ENCODE measurements at regions of chr7 and their contacts with region 1.

Region 1: DNA sequence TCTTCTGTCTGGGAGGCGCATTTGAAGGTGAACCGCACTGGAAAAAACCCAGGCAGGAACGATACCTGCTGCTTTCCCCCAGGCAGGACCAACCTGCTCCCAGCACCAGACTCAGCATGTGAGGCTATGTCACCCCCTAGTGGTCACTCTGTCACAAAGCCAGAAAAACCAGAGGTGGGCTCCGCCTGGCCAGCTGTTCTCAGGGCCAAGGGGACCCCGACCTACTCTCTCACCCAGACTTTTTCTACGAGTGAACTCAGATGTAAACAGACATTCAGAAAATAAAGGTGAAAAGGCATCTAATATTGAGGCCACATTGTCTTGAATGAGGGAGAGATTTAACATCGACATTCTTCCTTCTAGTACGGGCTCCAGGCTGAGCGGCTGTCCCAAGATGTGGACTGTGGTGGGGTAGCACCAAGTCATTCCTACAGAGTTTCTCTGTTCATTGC is 117.3 kb downstream of the PRKAG2 start:
- DNase-seq: peak in 8 of 9 experiments; percentile 31 to 81 (median 66)
- ATAC-seq: peak; percentile 62
- H3K4me3 ChIP-seq: no peak overlapping the region
- H3K4me3 Mint-ChIP-seq: no peak overlapping the region
- H3K27ac ChIP-seq: no peak overlapping the region
- H3K27ac Mint-ChIP-seq: peak overlapping the region; percentile 41
- H3K4me1 ChIP-seq: peaks cover 25% of the 10 kb centered on the region
- H3K4me1 Mint-ChIP-seq: peaks cover 29% of the 10 kb centered on the region
- H3K27me3 ChIP-seq: no peaks in the 10 kb centered on the region
- H3K27me3 Mint-ChIP-seq: no peaks in the 10 kb centered on the region
- CTCF ChIP-seq: peak; percentile 95

Region 2: DNA sequence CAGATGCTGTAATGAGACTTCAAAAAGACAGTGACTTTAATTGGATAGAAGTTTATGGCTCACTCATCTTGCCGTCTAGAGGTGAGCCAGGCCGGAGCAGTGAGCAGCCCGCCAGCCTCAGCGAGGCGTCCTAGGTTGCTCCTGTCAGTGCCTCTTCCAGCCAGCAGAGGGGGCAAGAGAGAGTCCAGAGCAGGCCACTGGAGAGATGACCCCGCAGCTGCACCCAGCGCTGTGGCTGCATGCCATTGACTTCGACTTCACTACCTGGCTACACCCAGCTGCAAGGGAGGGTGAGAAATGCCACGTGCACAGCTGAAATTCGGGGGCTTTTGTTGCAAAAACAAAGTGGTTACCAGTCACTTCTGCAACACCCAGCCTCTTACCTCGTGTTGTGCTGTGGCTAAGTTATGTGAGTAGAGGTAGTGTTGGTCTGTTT is 391.5 kb before region 1 on chr7:
- CTCF ChIA-PET with region 1: interaction called, 6 read pairs
- POLR2A ChIA-PET with region 1: no interaction called
- intact Hi-C with region 1: loop called (anchors 1 to 5 kb)
- DNase-seq: peak; percentile 56 to 86 (median 77)
- ATAC-seq: peak; percentile 97
- H3K4me3 ChIP-seq: no peak overlapping the region
- H3K4me3 Mint-ChIP-seq: no peak overlapping the region
- H3K27ac ChIP-seq: no peak overlapping the region
- H3K27ac Mint-ChIP-seq: peak overlapping the region; percentile 64
- H3K4me1 ChIP-seq: peaks cover 9% of the 10 kb centered on the region
- H3K4me1 Mint-ChIP-seq: peaks cover 18% of the 10 kb centered on the region
- H3K27me3 ChIP-seq: no peaks in the 10 kb centered on the region
- H3K27me3 Mint-ChIP-seq: no peaks in the 10 kb centered on the region
- CTCF ChIP-seq: peak; percentile 96

Region 3: GRCh38 chr7:151519765-151520418 is 239.7 kb before region 1 on chr7 and contains the start of gene RHEB:
- CTCF ChIA-PET with region 1: interaction called, 3 read pairs
- POLR2A ChIA-PET with region 1: no interaction called
- intact Hi-C with region 1: loop called in 1 of 2 experiments (anchors 2 kb)
- DNase-seq: peak; percentile 94 to 99 (median 98)
- ATAC-seq: peak; percentile 82
- H3K4me3 ChIP-seq: peak within 1 kb of the TSS; percentile 65 to 73
- H3K4me3 Mint-ChIP-seq: peak within 1 kb of the TSS; percentile 84
- H3K27ac ChIP-seq: peak within 1 kb of the TSS; percentile 85 to 86
- H3K27ac Mint-ChIP-seq: peak within 1 kb of the TSS; percentile 94
- H3K4me1 ChIP-seq: peaks cover 34% of the 10 kb centered on the region
- H3K4me1 Mint-ChIP-seq: peaks cover 41% of the 10 kb centered on the region
- H3K27me3 ChIP-seq: no peaks in the 10 kb centered on the region
- H3K27me3 Mint-ChIP-seq: no peaks in the 10 kb centered on the region
- CTCF ChIP-seq: no peak
- total RNA-seq, gene RHEB: 57.2 to 61.0 TPM

Region 4: GRCh38 chr7:151626422-151627115 is 133.0 kb before region 1 on chr7:
- CTCF ChIA-PET with region 1: interaction called, 19 read pairs
- POLR2A ChIA-PET with region 1: interaction called, 8 read pairs
- intact Hi-C with region 1: loop called (anchors 1 kb)
- DNase-seq: peak in 6 of 9 experiments; percentile 11 to 59 (median 38)
- ATAC-seq: peak; percentile 63
- H3K4me3 ChIP-seq: no peak overlapping the region
- H3K4me3 Mint-ChIP-seq: no peak overlapping the region
- H3K27ac ChIP-seq: no peak overlapping the region
- H3K27ac Mint-ChIP-seq: no peak overlapping the region
- H3K4me1 ChIP-seq: peaks cover 12% of the 10 kb centered on the region
- H3K4me1 Mint-ChIP-seq: peaks cover 61% of the 10 kb centered on the region
- H3K27me3 ChIP-seq: no peaks in the 10 kb centered on the region
- H3K27me3 Mint-ChIP-seq: no peaks in the 10 kb centered on the region
- CTCF ChIP-seq: peak; percentile 22

Region 5: GRCh38 chr7:151748733-151749132 is 10.9 kb before region 1 on chr7:
- CTCF ChIA-PET with region 1: interaction called, 13 read pairs
- POLR2A ChIA-PET with region 1: no interaction called
- intact Hi-C with region 1: no loop called
- DNase-seq: no peak
- ATAC-seq: no peak
- H3K4me3 ChIP-seq: no peak overlapping the region
- H3K4me3 Mint-ChIP-seq: no peak overlapping the region
- H3K27ac ChIP-seq: no peak overlapping the region
- H3K27ac Mint-ChIP-seq: no peak overlapping the region
- H3K4me1 ChIP-seq: peaks cover 10% of the 10 kb centered on the region
- H3K4me1 Mint-ChIP-seq: peaks cover 11% of the 10 kb centered on the region
- H3K27me3 ChIP-seq: no peaks in the 10 kb centered on the region
- H3K27me3 Mint-ChIP-seq: no peaks in the 10 kb centered on the region
- CTCF ChIP-seq: no peak

Region 6: DNA sequence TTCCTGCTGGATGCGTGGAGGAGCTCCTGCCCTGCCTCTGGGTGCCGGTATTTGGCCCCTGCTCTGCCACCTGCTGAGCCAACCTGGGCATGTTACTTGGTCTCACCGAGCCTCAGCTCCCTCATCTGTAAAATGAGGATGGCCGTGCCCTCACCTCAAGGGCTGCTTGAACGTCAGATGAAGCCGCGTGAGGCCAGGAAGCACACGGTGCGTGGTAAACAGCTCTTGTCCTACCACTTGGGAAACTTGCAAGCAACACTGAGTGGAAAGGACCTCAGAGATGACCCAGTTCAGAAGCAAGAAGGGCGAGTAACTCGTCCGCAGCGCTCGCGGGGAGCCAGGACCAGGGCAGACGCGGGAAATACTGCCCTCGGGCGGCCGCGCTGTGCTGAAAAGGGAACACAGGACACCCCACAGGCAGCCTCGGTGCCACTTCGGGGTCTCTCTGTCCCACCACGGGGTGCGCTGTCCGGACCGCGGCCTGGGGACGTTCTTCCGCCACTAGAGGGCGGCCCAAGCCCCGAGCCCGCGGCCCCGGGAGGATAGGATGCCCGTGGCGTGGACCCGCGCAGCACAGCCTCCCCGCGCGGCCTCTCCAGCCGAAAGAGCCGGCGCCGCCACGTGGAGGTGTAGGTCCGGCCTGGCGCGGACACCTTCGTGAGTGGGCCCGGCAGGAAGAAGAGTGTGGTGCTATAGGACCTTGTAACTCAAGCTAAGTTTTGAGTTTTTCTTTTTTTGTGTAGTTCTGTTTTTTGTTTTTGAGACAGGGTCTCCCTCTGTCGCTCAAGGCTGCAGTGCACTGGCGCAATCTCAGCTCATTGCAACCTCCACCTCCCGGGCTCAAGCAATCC is 23.2 kb after region 1 on chr7:
- CTCF ChIA-PET with region 1: interaction called, 54 read pairs
- POLR2A ChIA-PET with region 1: no interaction called
- intact Hi-C with region 1: loop called in 1 of 2 experiments (anchors 2 kb)
- DNase-seq: peak; percentile 50 to 85 (median 74)
- ATAC-seq: peak; percentile 89
- H3K4me3 ChIP-seq: peak overlapping the region; percentile 44 to 55
- H3K4me3 Mint-ChIP-seq: peak overlapping the region; percentile 87
- H3K27ac ChIP-seq: peak overlapping the region; percentile 29 to 49
- H3K27ac Mint-ChIP-seq: peak overlapping the region; percentile 93
- H3K4me1 ChIP-seq: peaks cover 12% of the 10 kb centered on the region
- H3K4me1 Mint-ChIP-seq: peaks cover 11% of the 10 kb centered on the region
- H3K27me3 ChIP-seq: no peaks in the 10 kb centered on the region
- H3K27me3 Mint-ChIP-seq: no peaks in the 10 kb centered on the region
- CTCF ChIP-seq: peak; percentile 84

Region 7: GRCh38 chr7:152998420-152998819 is 1238.8 kb after region 1 on chr7:
- CTCF ChIA-PET with region 1: no interaction called
- POLR2A ChIA-PET with region 1: no interaction called
- intact Hi-C with region 1: no loop called
- DNase-seq: no peak
- ATAC-seq: no peak
- H3K4me3 ChIP-seq: no peak overlapping the region
- H3K4me3 Mint-ChIP-seq: no peak overlapping the region
- H3K27ac ChIP-seq: no peak overlapping the region
- H3K27ac Mint-ChIP-seq: no peak overlapping the region
- H3K4me1 ChIP-seq: no peaks in the 10 kb centered on the region
- H3K4me1 Mint-ChIP-seq: no peaks in the 10 kb centered on the region
- H3K27me3 ChIP-seq: no peaks in the 10 kb centered on the region
- H3K27me3 Mint-ChIP-seq: no peaks in the 10 kb centered on the region
- CTCF ChIP-seq: no peak

Measured in CD8-positive, alpha-beta T cell (primary cell).